Activated CD4-positive, alpha-beta memory T cell treated with anti-CD3 and anti-CD28 coated beads for 36 hours (primary cell): ENCODE measurements at regions of chr21 and their contacts with region 1.

Region 1: GRCh38 chr21:42392721-42393442 is 3.0 kb downstream of the TMPRSS3 start:
- DNase-seq: peak; percentile 45
- H3K4me3 Mint-ChIP-seq: peak overlapping the region; percentile 64
- H3K27ac Mint-ChIP-seq: peak overlapping the region; percentile 84
- H3K4me1 Mint-ChIP-seq: peaks cover 52% of the 10 kb centered on the region
- H3K27me3 Mint-ChIP-seq: no peaks in the 10 kb centered on the region

Region 2: GRCh38 chr21:42406201-42406621 is 13.3 kb after region 1 on chr21:
- CTCF ChIA-PET with region 1: interaction called, 11 read pairs
- POLR2A ChIA-PET with region 1: interaction called, 36 read pairs
- intact Hi-C with region 1: loop called (anchors 1 kb)
- DNase-seq: peak; percentile 84
- H3K4me3 Mint-ChIP-seq: peak overlapping the region; percentile 98
- H3K27ac Mint-ChIP-seq: peak overlapping the region; percentile 99
- H3K4me1 Mint-ChIP-seq: peaks cover 54% of the 10 kb centered on the region
- H3K27me3 Mint-ChIP-seq: no peaks in the 10 kb centered on the region

Region 3: DNA sequence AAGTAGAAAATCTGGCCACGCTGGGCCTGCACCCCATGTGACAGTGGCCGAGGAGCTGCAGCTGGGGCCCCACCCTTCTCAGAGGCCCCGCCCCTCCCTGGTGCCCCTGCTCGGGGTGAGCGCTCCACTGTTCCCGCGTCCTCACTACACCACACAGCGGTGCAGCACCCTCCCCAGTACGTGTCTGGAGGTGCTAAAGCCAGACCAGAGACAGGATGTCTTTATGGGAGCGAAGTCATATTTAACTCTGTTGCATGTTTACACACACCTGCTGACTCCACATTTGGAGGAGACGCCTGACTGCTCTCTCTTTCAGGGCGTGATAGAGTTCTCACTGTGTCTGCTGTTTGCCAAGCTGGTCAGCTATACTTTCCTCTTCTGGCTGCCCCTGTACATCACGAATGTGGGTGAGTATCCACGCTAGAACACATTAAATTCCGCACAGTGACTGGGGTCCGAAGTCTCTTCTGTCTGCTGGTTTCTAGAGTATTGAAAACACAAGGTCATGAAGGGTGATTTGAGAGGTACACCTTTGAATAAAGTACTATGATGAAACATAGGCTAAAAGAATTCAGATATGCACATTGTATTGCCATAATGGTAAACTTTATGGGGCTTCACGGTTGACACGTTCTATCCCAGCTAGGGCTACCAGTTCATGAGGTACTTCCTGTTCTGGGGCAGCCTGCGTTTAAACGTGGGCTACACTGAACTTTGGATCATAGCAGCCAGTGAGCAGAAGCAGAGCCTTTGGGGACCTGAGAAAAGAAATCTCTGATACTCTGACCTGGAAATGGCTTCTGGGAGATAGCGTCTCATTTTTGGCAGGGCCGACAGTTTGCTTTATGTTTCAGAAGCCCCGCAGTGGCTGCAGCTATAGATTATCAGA is 169.1 kb after region 1 on chr21:
- CTCF ChIA-PET with region 1: no interaction called
- POLR2A ChIA-PET with region 1: no interaction called
- intact Hi-C with region 1: no loop called
- DNase-seq: no peak
- H3K4me3 Mint-ChIP-seq: no peak overlapping the region
- H3K27ac Mint-ChIP-seq: no peak overlapping the region
- H3K4me1 Mint-ChIP-seq: no peaks in the 10 kb centered on the region
- H3K27me3 Mint-ChIP-seq: no peaks in the 10 kb centered on the region